A549 (cell line): ENCODE measurements at regions of chr19 and their contacts with region 1.

Region 1: DNA sequence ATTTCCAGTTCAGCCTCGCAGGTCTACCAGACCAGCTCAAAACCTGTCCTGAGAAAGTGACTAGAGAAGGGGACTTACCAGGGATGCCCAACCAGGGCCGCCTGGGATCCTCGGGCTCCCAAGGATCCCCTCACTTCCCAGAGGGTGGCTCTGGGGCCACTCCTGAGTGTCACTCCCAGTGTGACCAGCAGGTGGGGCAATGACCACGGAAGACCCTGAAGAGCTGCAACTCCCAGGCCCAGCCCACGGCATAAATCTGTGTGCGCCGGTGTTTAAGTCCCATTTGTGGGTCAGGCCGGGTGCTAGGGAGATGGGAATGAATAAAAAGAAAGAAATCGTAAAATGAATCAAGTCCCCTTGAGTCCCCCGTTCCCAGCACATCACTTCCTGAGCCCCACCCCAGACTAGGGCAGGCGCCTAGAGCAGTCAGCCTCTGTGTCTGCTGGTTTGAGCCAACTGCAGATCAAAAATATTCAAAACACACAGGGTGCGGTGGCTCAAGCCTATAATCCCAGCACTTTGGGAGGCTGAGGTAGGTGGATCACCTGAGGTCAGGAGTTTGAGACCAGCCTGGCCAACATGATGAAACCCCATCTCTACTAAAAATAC is 10.7 kb downstream of the PTGIR start:
- DNase-seq: peak; percentile 86 to 97
- ATAC-seq: peak; percentile 80 to 92
- H3K4me3 ChIP-seq: no peak overlapping the region
- H3K27ac ChIP-seq: peak overlapping the region; percentile 18 to 52; a peak in 2 of 6 replicates
- H3K4me1 ChIP-seq: 0 out of 3 replicates have a peak, but pooled peaks cover 8% of the 10 kb centered on the region
- CTCF ChIP-seq: peak; percentile 91
- EP300 ChIP-seq: no peak
- POLR2A ChIP-seq: no peak
- RAD21 ChIP-seq: peak; percentile 79 to 84

Region 2: GRCh38 chr19:46361915-46362314 is 252.3 kb before region 1 on chr19:
- CTCF ChIA-PET with region 1: no interaction called
- POLR2A ChIA-PET with region 1: no interaction called
- DNase-seq: no peak
- ATAC-seq: no peak
- H3K4me3 ChIP-seq: no peak overlapping the region
- H3K27ac ChIP-seq: no peak overlapping the region
- H3K4me1 ChIP-seq: peaks cover 10% of the 10 kb centered on the region
- CTCF ChIP-seq: no peak
- EP300 ChIP-seq: no peak
- POLR2A ChIP-seq: no peak
- RAD21 ChIP-seq: no peak

Region 3: GRCh38 chr19:46529622-46530462 is 84.4 kb before region 1 on chr19:
- CTCF ChIA-PET with region 1: interaction called, 22 read pairs
- POLR2A ChIA-PET with region 1: no interaction called
- DNase-seq: peak; percentile 69 to 89
- ATAC-seq: peak; percentile 63 to 84; a peak in 5 of 6 replicates
- H3K4me3 ChIP-seq: no peak overlapping the region
- H3K27ac ChIP-seq: peak overlapping the region in 1 of 2 experiments; percentile 36; a peak in 2 of 6 replicates
- H3K4me1 ChIP-seq: peaks cover 10% of the 10 kb centered on the region; the same call in 1 of the 3 replicates
- CTCF ChIP-seq: peak; percentile 100
- EP300 ChIP-seq: no peak
- POLR2A ChIP-seq: no peak
- RAD21 ChIP-seq: peak; percentile 96 to 97

Region 4: GRCh38 chr19:46600384-46601317 is 13.6 kb before region 1 on chr19:
- CTCF ChIA-PET with region 1: interaction called, 737 read pairs
- POLR2A ChIA-PET with region 1: interaction called, 13 read pairs
- DNase-seq: peak; percentile 98 to 100
- ATAC-seq: peak; percentile 85 to 92
- H3K4me3 ChIP-seq: peak overlapping the region; percentile 94
- H3K27ac ChIP-seq: peak overlapping the region; percentile 96 to 97
- H3K4me1 ChIP-seq: peaks cover 23% of the 10 kb centered on the region
- CTCF ChIP-seq: no peak
- EP300 ChIP-seq: no peak
- POLR2A ChIP-seq: peak; percentile 87
- RAD21 ChIP-seq: no peak

Region 5: DNA sequence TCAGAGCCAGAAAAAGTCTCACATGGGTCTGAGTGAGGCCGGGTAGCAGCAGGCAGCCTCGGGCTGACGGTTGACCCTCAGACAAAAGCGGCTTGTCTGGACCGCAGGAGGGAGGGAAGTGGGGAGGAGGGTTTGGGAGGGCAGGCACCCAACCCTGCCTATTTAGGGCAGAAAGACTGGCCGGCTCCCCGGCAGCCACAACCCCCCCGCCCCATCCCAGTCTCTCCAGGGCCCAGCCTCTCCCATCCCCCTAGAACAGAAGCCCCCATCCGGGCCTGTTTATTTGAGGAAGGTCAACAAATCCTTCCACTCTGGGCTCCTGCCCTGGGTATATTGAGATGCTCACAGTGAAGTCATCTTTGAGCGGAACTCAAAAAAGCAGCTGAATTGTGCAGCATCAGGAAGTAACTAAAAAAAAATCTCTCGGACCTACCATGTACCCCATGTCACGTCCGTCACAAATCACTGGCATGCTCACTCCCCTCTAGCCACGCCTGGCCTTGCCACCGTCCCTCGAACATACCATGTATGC is 40.5 kb after region 1 on chr19:
- CTCF ChIA-PET with region 1: interaction called, 483 read pairs
- POLR2A ChIA-PET with region 1: no interaction called
- DNase-seq: no peak
- ATAC-seq: no peak
- H3K4me3 ChIP-seq: no peak overlapping the region
- H3K27ac ChIP-seq: no peak overlapping the region
- H3K4me1 ChIP-seq: peaks cover 7% of the 10 kb centered on the region
- CTCF ChIP-seq: no peak
- EP300 ChIP-seq: no peak
- POLR2A ChIP-seq: no peak
- RAD21 ChIP-seq: no peak

Region 6: GRCh38 chr19:46704379-46705076 is 90.3 kb after region 1 on chr19:
- CTCF ChIA-PET with region 1: interaction called, 12 read pairs
- POLR2A ChIA-PET with region 1: no interaction called
- DNase-seq: peak; percentile 64 to 90
- ATAC-seq: peak; percentile 80 to 90
- H3K4me3 ChIP-seq: no peak overlapping the region
- H3K27ac ChIP-seq: no peak overlapping the region
- H3K4me1 ChIP-seq: no peaks in the 10 kb centered on the region
- CTCF ChIP-seq: peak; percentile 88
- EP300 ChIP-seq: no peak
- POLR2A ChIP-seq: no peak
- RAD21 ChIP-seq: peak; percentile 44 to 62